ENCODE measurements at regions of chr4 and their contacts with region 1.

Region 1: GRCh38 chr4:103008875-103009729 is 10.4 kb downstream of the SLC9B1 start:
- DNase-seq: peak in 3 of 9 experiments; percentile 19 to 82 (median 75)
- ATAC-seq: peak; percentile 97
- H3K4me3 ChIP-seq: no peak overlapping the region
- H3K4me3 Mint-ChIP-seq: no peak overlapping the region
- H3K27ac ChIP-seq: no peak overlapping the region
- H3K27ac Mint-ChIP-seq: no peak overlapping the region
- H3K4me1 ChIP-seq: no peaks in the 10 kb centered on the region
- H3K4me1 Mint-ChIP-seq: peaks cover 2% of the 10 kb centered on the region
- H3K27me3 ChIP-seq: no peaks in the 10 kb centered on the region
- H3K27me3 Mint-ChIP-seq: no peaks in the 10 kb centered on the region
- CTCF ChIP-seq: peak; percentile 85

Region 2: GRCh38 chr4:102449751-102450352 is 559.2 kb before region 1 on chr4:
- CTCF ChIA-PET with region 1: interaction called, 10 read pairs
- POLR2A ChIA-PET with region 1: interaction called, 3 read pairs
- intact Hi-C with region 1: loop called (anchors 1 kb)
- DNase-seq: peak; percentile 21 to 82 (median 48)
- ATAC-seq: peak; percentile 89
- H3K4me3 ChIP-seq: no peak overlapping the region
- H3K4me3 Mint-ChIP-seq: no peak overlapping the region
- H3K27ac ChIP-seq: no peak overlapping the region
- H3K27ac Mint-ChIP-seq: no peak overlapping the region
- H3K4me1 ChIP-seq: no peaks in the 10 kb centered on the region
- H3K4me1 Mint-ChIP-seq: peaks cover 10% of the 10 kb centered on the region
- H3K27me3 ChIP-seq: no peaks in the 10 kb centered on the region
- H3K27me3 Mint-ChIP-seq: no peaks in the 10 kb centered on the region
- CTCF ChIP-seq: peak; percentile 83

Region 3: GRCh38 chr4:102760645-102761295 is 248.3 kb before region 1 on chr4 and contains the start of gene MANBA:
- CTCF ChIA-PET with region 1: no interaction called
- POLR2A ChIA-PET with region 1: no interaction called
- intact Hi-C with region 1: loop called in 1 of 2 experiments (anchors 2 kb)
- DNase-seq: peak; percentile 67 to 90 (median 84)
- ATAC-seq: peak; percentile 83
- H3K4me3 ChIP-seq: peak within 1 kb of the TSS; percentile 88 to 93
- H3K4me3 Mint-ChIP-seq: peak within 1 kb of the TSS; percentile 96
- H3K27ac ChIP-seq: peak within 1 kb of the TSS; percentile 62 to 65
- H3K27ac Mint-ChIP-seq: peak within 1 kb of the TSS; percentile 94
- H3K4me1 ChIP-seq: peaks cover 10% of the 10 kb centered on the region
- H3K4me1 Mint-ChIP-seq: peaks cover 42% of the 10 kb centered on the region
- H3K27me3 ChIP-seq: no peaks in the 10 kb centered on the region
- H3K27me3 Mint-ChIP-seq: no peaks in the 10 kb centered on the region
- CTCF ChIP-seq: no peak
- total RNA-seq, gene MANBA: 22.5 to 24.1 TPM

Region 4: GRCh38 chr4:102809190-102809589 is 199.9 kb before region 1 on chr4:
- CTCF ChIA-PET with region 1: no interaction called
- POLR2A ChIA-PET with region 1: no interaction called
- intact Hi-C with region 1: loop called in 1 of 2 experiments (anchors 5 kb)
- DNase-seq: peak in 1 of 9 experiments; percentile 30
- ATAC-seq: peak; percentile 77
- H3K4me3 ChIP-seq: no peak overlapping the region
- H3K4me3 Mint-ChIP-seq: peak overlapping the region; percentile 56
- H3K27ac ChIP-seq: peak overlapping the region in 1 of 2 experiments; percentile 51
- H3K27ac Mint-ChIP-seq: peak overlapping the region; percentile 74
- H3K4me1 ChIP-seq: peaks cover 64% of the 10 kb centered on the region
- H3K4me1 Mint-ChIP-seq: peaks cover 80% of the 10 kb centered on the region
- H3K27me3 ChIP-seq: no peaks in the 10 kb centered on the region
- H3K27me3 Mint-ChIP-seq: no peaks in the 10 kb centered on the region
- CTCF ChIP-seq: no peak

Region 5: DNA sequence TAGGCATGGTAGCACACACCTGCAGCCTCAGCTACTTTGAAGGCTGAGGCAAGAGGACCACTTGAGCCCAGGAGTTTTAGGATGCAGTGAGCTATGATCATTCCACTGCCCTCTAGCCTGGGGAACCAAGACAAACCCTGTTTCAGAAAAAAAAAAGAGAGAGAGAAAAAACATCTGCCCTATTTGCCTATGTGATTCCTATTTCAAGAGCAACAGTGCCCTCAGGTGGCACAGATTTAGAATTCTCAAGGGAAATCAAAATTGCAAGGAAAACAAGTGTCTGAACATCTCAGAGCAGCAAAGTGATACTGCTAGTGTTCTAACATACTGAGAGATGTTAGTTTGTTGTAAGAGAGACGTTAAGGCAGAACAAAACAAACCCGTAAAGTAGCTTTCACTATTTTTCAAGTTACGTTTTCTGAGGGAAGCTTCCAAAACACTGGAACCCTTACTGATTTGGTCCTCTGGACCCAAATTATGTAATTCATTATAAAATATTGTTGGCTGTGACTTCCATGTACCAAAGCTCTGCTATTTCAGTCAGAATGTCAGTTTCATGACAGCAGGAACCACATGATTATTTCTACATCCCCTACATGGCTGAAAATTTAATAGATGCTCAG is 82.6 kb after region 1 on chr4:
- CTCF ChIA-PET with region 1: interaction called, 4 read pairs
- POLR2A ChIA-PET with region 1: no interaction called
- intact Hi-C with region 1: loop called in 1 of 2 experiments (anchors 5 kb)
- DNase-seq: peak in 6 of 9 experiments; percentile 9 to 80 (median 47)
- ATAC-seq: peak; percentile 78
- H3K4me3 ChIP-seq: no peak overlapping the region
- H3K4me3 Mint-ChIP-seq: no peak overlapping the region
- H3K27ac ChIP-seq: no peak overlapping the region
- H3K27ac Mint-ChIP-seq: no peak overlapping the region
- H3K4me1 ChIP-seq: no peaks in the 10 kb centered on the region
- H3K4me1 Mint-ChIP-seq: peaks cover 18% of the 10 kb centered on the region
- H3K27me3 ChIP-seq: no peaks in the 10 kb centered on the region
- H3K27me3 Mint-ChIP-seq: no peaks in the 10 kb centered on the region
- CTCF ChIP-seq: peak; percentile 71

Measured in CD8-positive, alpha-beta T cell (primary cell).